MCF 10A (cell line): ENCODE measurements at regions of chr16 and their contacts with region 1.

Region 1: DNA sequence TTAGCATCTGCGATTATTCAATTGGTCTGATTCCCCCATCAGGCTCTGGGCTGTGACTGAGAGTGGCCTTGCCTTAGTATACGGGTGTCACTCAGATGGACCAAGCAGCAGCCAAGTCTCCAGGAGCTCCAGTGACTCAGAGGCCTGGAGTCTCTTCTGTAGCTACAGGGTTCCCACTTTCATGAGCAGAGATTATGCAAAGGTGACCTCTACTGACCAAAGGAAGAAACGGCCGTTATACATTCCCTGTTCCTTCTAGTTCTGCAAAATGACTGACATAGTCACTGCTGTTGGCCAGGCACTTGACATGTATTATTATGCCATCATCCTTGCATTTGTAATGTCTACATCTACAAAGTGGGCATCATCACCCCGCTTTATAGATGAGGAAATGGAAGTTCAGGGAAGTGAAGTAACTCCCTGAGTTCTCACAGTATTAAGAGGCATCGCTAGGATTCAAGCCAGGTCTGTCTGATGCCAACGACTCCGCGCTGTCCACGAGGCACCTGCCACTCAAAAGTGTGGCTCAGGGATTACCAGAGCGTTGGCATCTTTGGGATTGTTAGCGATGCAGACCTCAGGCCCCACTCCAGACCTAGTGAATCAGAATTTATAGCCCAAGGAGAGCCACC is 23.3 kb downstream of the SLC38A7 start:
- DNase-seq: peak; percentile 90
- H3K4me3 Mint-ChIP-seq: no peak overlapping the region
- H3K27ac Mint-ChIP-seq: no peak overlapping the region
- H3K4me1 Mint-ChIP-seq: no peaks in the 10 kb centered on the region
- H3K27me3 Mint-ChIP-seq: no peaks in the 10 kb centered on the region
- CTCF ChIP-seq: peak; percentile 57

Region 2: DNA sequence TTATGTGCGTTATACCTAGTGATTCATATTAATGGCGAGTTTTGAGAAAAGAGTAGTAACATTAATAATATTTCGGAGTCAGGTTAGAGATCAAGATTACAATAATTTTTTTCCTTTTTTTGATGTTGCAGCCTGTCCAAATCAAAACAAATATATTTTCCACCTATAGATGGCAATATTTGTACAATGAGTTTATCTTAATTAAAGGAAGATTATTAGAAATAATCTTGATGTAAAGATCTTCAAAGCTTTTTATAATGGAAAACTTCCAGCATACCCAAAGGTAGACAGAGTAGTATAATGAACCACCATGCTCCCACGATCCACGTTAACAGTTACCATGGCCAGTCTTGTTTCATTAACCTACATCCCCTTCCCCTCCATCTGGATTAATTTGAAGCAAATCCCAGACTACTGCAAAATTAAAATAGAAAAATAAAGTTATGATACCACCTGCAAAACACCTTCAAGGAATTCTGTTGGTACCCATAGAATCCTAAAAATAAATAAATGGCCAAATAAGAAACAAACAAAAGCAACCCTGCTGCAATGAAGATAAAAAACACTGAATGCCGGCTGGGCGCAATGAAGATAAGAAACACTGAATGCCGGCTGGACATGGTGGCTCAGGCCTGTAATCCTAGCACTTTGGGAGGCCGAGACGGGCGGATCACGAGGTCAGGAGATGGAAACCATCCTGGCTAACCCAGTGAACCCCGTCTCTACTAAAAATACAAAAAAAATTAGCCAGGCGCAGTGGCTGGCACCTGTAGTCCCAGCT is 315.6 kb before region 1 on chr16:
- CTCF ChIA-PET with region 1: no interaction called
- POLR2A ChIA-PET with region 1: no interaction called
- intact Hi-C with region 1: loop called (anchors 2 kb)
- DNase-seq: no peak
- H3K4me3 Mint-ChIP-seq: no peak overlapping the region
- H3K27ac Mint-ChIP-seq: no peak overlapping the region
- H3K4me1 Mint-ChIP-seq: no peaks in the 10 kb centered on the region
- H3K27me3 Mint-ChIP-seq: peaks cover 48% of the 10 kb centered on the region
- CTCF ChIP-seq: peak; percentile 24

Region 3: DNA sequence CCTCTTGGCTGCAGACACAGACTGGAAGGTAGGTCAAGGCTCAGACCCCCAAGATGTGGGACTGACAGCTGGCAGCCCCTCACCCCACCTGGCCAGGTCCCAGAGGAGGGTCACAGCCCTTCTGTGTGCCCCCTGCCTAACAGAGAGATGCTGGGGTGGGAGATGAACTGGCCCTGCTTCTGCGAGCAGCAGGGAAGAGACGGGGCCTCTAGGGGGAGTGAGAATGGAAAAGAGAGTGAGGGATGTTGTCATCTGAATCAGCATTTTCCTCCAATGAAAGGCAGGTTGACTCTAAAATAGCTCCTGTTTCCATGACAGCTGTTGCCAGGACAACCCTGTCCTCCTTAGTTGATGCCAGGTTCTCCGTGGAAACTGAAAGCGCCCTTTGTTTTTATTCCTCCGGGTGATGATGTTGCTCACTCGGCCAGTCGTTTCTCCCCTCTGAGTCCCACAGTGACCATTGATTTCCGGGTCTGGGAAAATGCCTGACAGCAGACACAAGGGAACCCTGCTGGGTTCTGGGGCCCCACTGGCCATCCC is 166.3 kb before region 1 on chr16:
- CTCF ChIA-PET with region 1: interaction called, 3 read pairs
- POLR2A ChIA-PET with region 1: no interaction called
- intact Hi-C with region 1: loop called (anchors 5 kb)
- DNase-seq: peak; percentile 86
- H3K4me3 Mint-ChIP-seq: no peak overlapping the region
- H3K27ac Mint-ChIP-seq: no peak overlapping the region
- H3K4me1 Mint-ChIP-seq: no peaks in the 10 kb centered on the region
- H3K27me3 Mint-ChIP-seq: no peaks in the 10 kb centered on the region
- CTCF ChIP-seq: peak; percentile 42

Region 4: GRCh38 chr16:58515125-58515870 is 146.0 kb before region 1 on chr16 and contains the start of gene SETD6:
- CTCF ChIA-PET with region 1: interaction called, 18 read pairs
- POLR2A ChIA-PET with region 1: no interaction called
- intact Hi-C with region 1: loop called (anchors 1 kb)
- DNase-seq: peak; percentile 88
- H3K4me3 Mint-ChIP-seq: peak within 1 kb of the TSS; percentile 93
- H3K27ac Mint-ChIP-seq: peak within 1 kb of the TSS; percentile 92
- H3K4me1 Mint-ChIP-seq: peaks cover 6% of the 10 kb centered on the region
- H3K27me3 Mint-ChIP-seq: no peaks in the 10 kb centered on the region
- CTCF ChIP-seq: peak; percentile 18
- total RNA-seq, gene SETD6: 18.4 and 19.5 TPM in 2 replicates

Region 5: GRCh38 chr16:58614212-58614611 is 47.1 kb before region 1 on chr16:
- CTCF ChIA-PET with region 1: no interaction called
- POLR2A ChIA-PET with region 1: no interaction called
- intact Hi-C with region 1: no loop called
- DNase-seq: no peak
- H3K4me3 Mint-ChIP-seq: no peak overlapping the region
- H3K27ac Mint-ChIP-seq: no peak overlapping the region
- H3K4me1 Mint-ChIP-seq: no peaks in the 10 kb centered on the region
- H3K27me3 Mint-ChIP-seq: no peaks in the 10 kb centered on the region
- CTCF ChIP-seq: no peak

Region 6: DNA sequence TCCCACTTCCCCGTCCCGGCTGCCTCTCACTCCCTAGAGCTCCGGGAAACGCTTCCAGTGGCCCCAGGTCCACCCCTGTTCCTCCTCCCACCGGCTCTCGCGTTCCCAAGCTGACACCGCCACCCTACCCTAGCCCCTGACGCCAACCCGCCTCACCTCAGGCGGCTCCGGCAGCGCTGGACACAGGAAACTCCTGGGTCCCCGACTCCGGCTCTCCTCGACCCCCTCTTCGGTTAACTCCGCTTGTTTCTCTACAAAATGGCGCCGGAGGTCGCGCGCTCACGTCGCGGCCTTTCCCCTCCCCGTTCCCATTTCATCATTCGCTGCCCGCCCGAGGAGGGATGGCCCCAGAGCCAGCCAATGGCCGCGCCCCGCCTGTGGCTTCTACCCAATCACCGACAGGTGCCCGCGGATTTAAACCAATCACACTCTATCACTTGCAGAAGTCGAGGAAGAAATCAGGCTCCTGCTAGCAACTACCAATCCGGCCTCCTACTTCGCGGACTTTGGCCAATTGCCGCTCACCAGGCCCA is 31.7 kb before region 1 on chr16 and contains the start of gene CNOT1:
- CTCF ChIA-PET with region 1: interaction called, 4 read pairs
- POLR2A ChIA-PET with region 1: interaction called, 15 read pairs
- intact Hi-C with region 1: no loop called
- DNase-seq: peak; percentile 99
- H3K4me3 Mint-ChIP-seq: peak within 1 kb of the TSS; percentile 99
- H3K27ac Mint-ChIP-seq: peak within 1 kb of the TSS; percentile 100
- H3K4me1 Mint-ChIP-seq: peaks cover 7% of the 10 kb centered on the region
- H3K27me3 Mint-ChIP-seq: no peaks in the 10 kb centered on the region
- CTCF ChIP-seq: no peak
- total RNA-seq, gene CNOT1: 201 and 219 TPM in 2 replicates